Left ventricle myocardium inferior (tissue), 1 donor: ENCODE measurements at regions of chr1 and their contacts with region 1.

Region 1: GRCh38 chr1:25239681-25240541 is 7.3 kb downstream of the RSRP1 start:
- DNase-seq: peak; percentile 92
- H3K4me3 ChIP-seq: peak overlapping the region; percentile 69
- H3K27ac ChIP-seq: peak overlapping the region; percentile 95
- H3K4me1 ChIP-seq: peaks cover 80% of the 10 kb centered on the region
- H3K27me3 ChIP-seq: no peaks in the 10 kb centered on the region
- CTCF ChIP-seq: peak; percentile 75

Region 2: GRCh38 chr1:24830680-24831272 is 409.1 kb before region 1 on chr1:
- intact Hi-C with region 1: no loop called
- DNase-seq: no peak
- H3K4me3 ChIP-seq: no peak overlapping the region
- H3K27ac ChIP-seq: peak overlapping the region; percentile 13
- H3K4me1 ChIP-seq: peaks cover 62% of the 10 kb centered on the region
- H3K27me3 ChIP-seq: no peaks in the 10 kb centered on the region
- CTCF ChIP-seq: peak; percentile 94

Region 3: GRCh38 chr1:25343872-25344271 is 104.0 kb after region 1 on chr1:
- intact Hi-C with region 1: loop called (anchors 10 kb)
- DNase-seq: no peak
- H3K4me3 ChIP-seq: no peak overlapping the region
- H3K27ac ChIP-seq: no peak overlapping the region
- H3K4me1 ChIP-seq: peaks cover 35% of the 10 kb centered on the region
- H3K27me3 ChIP-seq: no peaks in the 10 kb centered on the region
- CTCF ChIP-seq: no peak